ENCODE measurements at regions of chr1 and their contacts with region 1.

Region 1: GRCh38 chr1:205523891-205524793 is 19.7 kb downstream of the CDK18 start:
- DNase-seq: peak; percentile 87
- ATAC-seq: peak; percentile 45
- H3K4me3 Mint-ChIP-seq: no peak overlapping the region
- H3K27ac Mint-ChIP-seq: no peak overlapping the region
- H3K4me1 Mint-ChIP-seq: no peaks in the 10 kb centered on the region
- H3K27me3 Mint-ChIP-seq: no peaks in the 10 kb centered on the region

Region 2: DNA sequence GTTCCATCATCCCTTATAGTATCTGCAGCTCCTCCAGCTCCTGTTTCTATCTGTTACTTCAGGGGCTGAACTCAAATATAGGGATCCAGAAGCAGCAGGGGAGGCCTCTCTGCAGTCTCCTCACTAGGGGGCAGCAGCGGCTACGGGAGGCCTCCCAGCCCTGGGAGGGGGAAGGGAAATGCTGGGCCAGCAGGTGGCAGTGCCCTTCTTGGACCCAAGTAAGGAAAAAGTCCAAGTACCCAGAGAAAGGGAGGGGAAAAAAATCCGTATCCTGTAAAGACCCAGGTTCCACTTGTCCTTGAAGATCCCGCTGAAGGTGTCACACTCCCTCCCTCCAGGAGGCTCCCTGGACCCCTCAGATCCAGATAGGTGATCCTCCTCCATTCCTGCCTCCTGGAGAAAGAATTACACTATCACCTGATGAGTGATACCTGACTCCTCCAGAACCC is 188.5 kb before region 1 on chr1:
- CTCF ChIA-PET with region 1: interaction called, 34 read pairs
- POLR2A ChIA-PET with region 1: no interaction called
- intact Hi-C with region 1: loop called (anchors 1 to 2 kb)
- DNase-seq: peak; percentile 92
- ATAC-seq: peak; percentile 96
- H3K4me3 Mint-ChIP-seq: no peak overlapping the region
- H3K27ac Mint-ChIP-seq: no peak overlapping the region
- H3K4me1 Mint-ChIP-seq: no peaks in the 10 kb centered on the region
- H3K27me3 Mint-ChIP-seq: no peaks in the 10 kb centered on the region

Region 3: GRCh38 chr1:205354259-205354904 is 169.8 kb before region 1 on chr1:
- CTCF ChIA-PET with region 1: interaction called, 54 read pairs
- POLR2A ChIA-PET with region 1: no interaction called
- intact Hi-C with region 1: loop called (anchors 1 kb)
- DNase-seq: peak; percentile 76
- ATAC-seq: peak; percentile 88
- H3K4me3 Mint-ChIP-seq: no peak overlapping the region
- H3K27ac Mint-ChIP-seq: no peak overlapping the region
- H3K4me1 Mint-ChIP-seq: no peaks in the 10 kb centered on the region
- H3K27me3 Mint-ChIP-seq: peaks cover 10% of the 10 kb centered on the region

Region 4: DNA sequence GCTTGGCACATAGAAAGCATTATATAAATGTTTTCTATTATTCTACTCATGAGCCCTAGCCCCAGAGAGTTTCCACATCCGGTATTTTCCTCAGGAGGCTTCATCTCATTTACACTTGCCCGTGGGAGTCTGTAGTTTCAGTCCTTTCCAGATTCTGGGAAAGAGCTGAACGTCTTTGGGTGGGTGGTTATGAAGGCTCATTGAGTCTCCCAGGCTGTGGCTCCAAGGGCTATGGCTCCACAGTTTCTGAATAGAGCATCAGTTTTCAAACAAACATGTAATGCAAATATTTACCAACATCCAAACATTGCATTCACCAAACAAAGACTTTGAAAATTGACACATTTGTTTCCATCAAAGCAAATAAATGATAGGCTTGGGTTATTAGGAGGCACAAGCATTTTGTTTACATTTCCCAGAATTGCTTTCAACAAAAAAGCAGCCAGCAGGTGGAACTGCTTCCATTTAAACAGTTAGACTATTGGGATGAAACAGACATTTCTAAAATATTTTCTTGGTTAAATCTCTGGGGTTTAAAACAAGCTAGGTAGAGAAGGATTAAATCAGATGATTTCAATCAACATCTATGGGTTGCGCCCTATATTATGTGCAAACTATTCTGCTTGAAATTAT is 101.0 kb before region 1 on chr1:
- CTCF ChIA-PET with region 1: interaction called, 6 read pairs
- POLR2A ChIA-PET with region 1: no interaction called
- intact Hi-C with region 1: loop called in 1 of 2 experiments (anchors 5 kb)
- DNase-seq: no peak
- ATAC-seq: no peak
- H3K4me3 Mint-ChIP-seq: no peak overlapping the region
- H3K27ac Mint-ChIP-seq: no peak overlapping the region
- H3K4me1 Mint-ChIP-seq: no peaks in the 10 kb centered on the region
- H3K27me3 Mint-ChIP-seq: peaks cover 28% of the 10 kb centered on the region

Region 5: GRCh38 chr1:205536759-205537361 is 12.7 kb after region 1 on chr1:
- CTCF ChIA-PET with region 1: interaction called, 14 read pairs
- POLR2A ChIA-PET with region 1: interaction called, 5 read pairs
- intact Hi-C with region 1: no loop called
- DNase-seq: no peak
- ATAC-seq: no peak
- H3K4me3 Mint-ChIP-seq: no peak overlapping the region
- H3K27ac Mint-ChIP-seq: no peak overlapping the region
- H3K4me1 Mint-ChIP-seq: peaks cover 7% of the 10 kb centered on the region
- H3K27me3 Mint-ChIP-seq: peaks cover 9% of the 10 kb centered on the region